ENCODE measurements at regions of chr15 and their contacts with region 1.

Region 1: DNA sequence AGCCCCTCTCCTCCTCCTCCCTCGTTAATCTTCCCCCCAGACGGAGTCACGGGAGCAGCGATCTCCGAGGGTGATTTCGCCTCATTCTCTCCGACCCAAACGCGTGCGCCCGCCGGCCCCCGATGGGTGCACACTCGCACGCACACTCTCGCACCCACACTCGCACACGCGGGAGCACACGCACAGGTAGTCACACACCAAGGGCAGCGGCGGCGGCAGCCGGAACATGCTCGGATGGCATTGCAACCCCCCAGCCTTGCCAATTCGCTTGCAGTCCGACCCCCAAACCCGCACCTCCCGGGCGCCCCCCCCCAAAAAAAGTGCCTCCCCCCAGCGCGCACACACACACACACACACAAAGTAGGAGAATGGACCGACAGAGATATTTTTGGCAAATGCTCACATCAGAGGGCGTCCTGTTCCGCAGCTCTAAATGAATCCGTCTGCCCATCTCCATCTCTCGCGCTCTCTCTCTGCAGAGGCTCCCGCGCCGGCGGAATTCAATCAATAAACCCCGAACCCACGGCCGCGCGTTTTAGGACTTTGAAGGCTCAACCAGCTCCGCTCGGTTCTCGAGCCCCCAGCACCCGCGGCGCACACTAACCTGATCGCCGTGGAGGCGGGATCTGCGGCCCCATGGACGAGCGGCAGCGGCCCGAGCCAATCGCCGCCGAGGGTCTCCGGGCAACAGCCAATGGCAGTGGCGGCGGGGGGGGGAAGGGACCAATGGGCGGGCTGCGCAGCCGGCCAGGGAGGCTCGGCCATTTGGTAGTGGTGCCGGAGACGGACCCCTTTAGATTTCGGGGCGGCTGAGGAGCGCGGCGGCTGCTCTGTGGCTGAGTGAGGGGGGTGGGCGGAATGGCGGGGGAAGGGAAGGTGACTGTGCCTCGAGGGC is at the start of gene ANP32A:
- DNase-seq: peak; percentile 96
- H3K4me3 ChIP-seq: peak within 1 kb of the TSS; percentile 92 to 97 (median 93)
- H3K27ac ChIP-seq: peak within 1 kb of the TSS; percentile 77
- H3K4me1 ChIP-seq: peaks cover 19% of the 10 kb centered on the region
- H3K27me3 ChIP-seq: peaks cover 0 to 3% of the 10 kb centered on the region in 2 experiments
- CTCF ChIP-seq: no peak
- POLR2A ChIP-seq: no peak
- total RNA-seq, gene ANP32A: 169 and 179 TPM in 2 replicates

Region 2: DNA sequence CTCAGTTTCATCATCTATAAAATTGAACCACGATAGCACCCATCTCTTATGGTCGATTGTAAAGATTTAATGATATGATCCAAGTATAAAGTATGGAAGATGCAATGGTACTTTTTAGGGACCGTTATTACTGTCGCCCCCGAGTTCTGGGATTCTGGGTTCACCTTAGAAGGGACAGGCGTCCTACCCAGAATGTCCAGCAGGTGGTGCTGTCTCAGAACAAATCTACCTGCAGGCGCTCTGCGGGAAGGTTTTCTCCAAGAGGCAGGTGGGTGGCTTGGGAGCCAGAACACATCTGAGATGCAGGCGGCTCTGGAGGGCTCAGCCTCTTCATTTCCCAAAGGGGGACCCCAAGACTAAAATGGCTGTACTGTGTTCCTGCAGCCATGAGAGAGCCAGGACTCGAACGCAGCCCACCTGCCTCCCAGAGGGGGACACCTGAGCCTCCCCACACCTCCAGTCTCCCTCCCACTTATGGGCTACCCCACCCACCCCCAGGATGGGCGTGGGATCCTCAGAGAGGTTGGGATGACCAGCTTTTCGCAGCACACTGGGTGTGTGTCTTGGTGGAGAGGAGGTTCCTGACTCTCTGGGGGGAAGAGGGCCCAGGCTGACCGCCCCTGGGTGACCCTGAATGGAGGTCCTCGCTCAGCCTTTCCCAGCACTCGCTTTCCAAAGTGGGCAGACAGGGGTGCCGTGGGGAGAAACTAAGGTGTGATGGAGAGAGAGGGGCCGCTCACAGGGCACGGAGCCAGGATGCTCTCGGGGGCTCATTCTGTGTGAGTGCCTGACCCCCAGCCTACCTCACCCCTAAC is 269.9 kb before region 1 on chr15:
- CTCF ChIA-PET with region 1: interaction called, 4 read pairs
- POLR2A ChIA-PET with region 1: no interaction called
- dilution Hi-C with region 1: no loop called
- intact Hi-C with region 1: loop called (anchors 5 kb)
- DNase-seq: peak; percentile 41
- H3K4me3 ChIP-seq: no peak overlapping the region
- H3K27ac ChIP-seq: no peak overlapping the region
- H3K4me1 ChIP-seq: peaks cover 8% of the 10 kb centered on the region
- H3K27me3 ChIP-seq: peaks cover 5% of the 10 kb centered on the region in 2 experiments
- CTCF ChIP-seq: peak; percentile 80 to 87
- POLR2A ChIP-seq: no peak

Region 3: GRCh38 chr15:68730471-68730919 is 90.0 kb before region 1 on chr15:
- CTCF ChIA-PET with region 1: interaction called, 3 read pairs
- POLR2A ChIA-PET with region 1: interaction called, 3 read pairs
- dilution Hi-C with region 1: no loop called
- intact Hi-C with region 1: loop called (anchors 1 kb)
- DNase-seq: peak; percentile 76
- H3K4me3 ChIP-seq: no peak overlapping the region
- H3K27ac ChIP-seq: no peak overlapping the region
- H3K4me1 ChIP-seq: peaks cover 2% of the 10 kb centered on the region
- H3K27me3 ChIP-seq: peaks cover 9 to 11% of the 10 kb centered on the region in 2 experiments
- CTCF ChIP-seq: peak; percentile 35 to 64
- POLR2A ChIP-seq: no peak

Region 4: GRCh38 chr15:68755731-68756130 is 64.8 kb before region 1 on chr15:
- CTCF ChIA-PET with region 1: no interaction called
- POLR2A ChIA-PET with region 1: interaction called, 4 read pairs
- dilution Hi-C with region 1: no loop called
- intact Hi-C with region 1: loop called (anchors 2 kb)
- DNase-seq: no peak
- H3K4me3 ChIP-seq: no peak overlapping the region
- H3K27ac ChIP-seq: no peak overlapping the region
- H3K4me1 ChIP-seq: peaks cover 19% of the 10 kb centered on the region
- H3K27me3 ChIP-seq: peaks cover 2 to 7% of the 10 kb centered on the region in 2 experiments
- CTCF ChIP-seq: no peak
- POLR2A ChIP-seq: no peak

Region 5: GRCh38 chr15:68765602-68766368 is 54.8 kb before region 1 on chr15:
- CTCF ChIA-PET with region 1: no interaction called
- POLR2A ChIA-PET with region 1: no interaction called
- dilution Hi-C with region 1: no loop called
- intact Hi-C with region 1: loop called (anchors 1 kb)
- DNase-seq: peak; percentile 80
- H3K4me3 ChIP-seq: no peak overlapping the region
- H3K27ac ChIP-seq: peak overlapping the region; percentile 35
- H3K4me1 ChIP-seq: peaks cover 52% of the 10 kb centered on the region
- H3K27me3 ChIP-seq: no peaks in the 10 kb centered on the region
- CTCF ChIP-seq: no peak
- POLR2A ChIP-seq: no peak

Region 6: GRCh38 chr15:68783226-68784058 is 37.1 kb before region 1 on chr15:
- CTCF ChIA-PET with region 1: interaction called, 7 read pairs
- POLR2A ChIA-PET with region 1: no interaction called
- dilution Hi-C with region 1: no loop called
- intact Hi-C with region 1: loop called (anchors 1 kb)
- DNase-seq: peak; percentile 32
- H3K4me3 ChIP-seq: no peak overlapping the region
- H3K27ac ChIP-seq: no peak overlapping the region
- H3K4me1 ChIP-seq: peaks cover 14% of the 10 kb centered on the region
- H3K27me3 ChIP-seq: no peaks in the 10 kb centered on the region
- CTCF ChIP-seq: peak; percentile 39 to 73
- POLR2A ChIP-seq: no peak

Region 7: DNA sequence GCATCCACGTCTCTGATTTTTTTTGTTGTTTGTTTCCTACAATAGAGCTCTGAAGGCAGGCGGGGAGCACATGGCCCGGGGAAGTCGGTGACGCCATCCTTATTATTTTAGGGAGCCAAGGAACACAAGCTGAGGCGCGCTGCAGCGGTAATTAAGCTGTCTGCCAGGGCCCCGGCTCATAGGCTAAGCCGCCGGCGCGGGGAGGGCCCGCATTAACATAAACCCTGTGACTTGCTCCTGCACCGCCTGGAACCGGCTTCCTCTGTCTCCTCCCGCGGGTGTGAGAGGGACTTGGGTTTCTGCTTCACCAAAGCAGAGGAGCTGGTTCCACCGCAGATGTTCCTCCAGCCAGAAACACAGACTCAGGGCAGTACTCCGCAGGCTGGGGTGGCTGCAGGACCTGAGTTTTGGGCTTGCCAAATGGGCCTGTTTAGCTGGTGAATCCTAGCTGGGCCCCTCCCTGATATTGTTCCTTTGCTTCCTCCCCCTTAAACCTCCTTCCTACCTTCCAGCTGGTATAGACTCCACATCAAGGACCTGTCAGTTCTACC is 25.2 kb before region 1 on chr15:
- CTCF ChIA-PET with region 1: interaction called, 12 read pairs
- POLR2A ChIA-PET with region 1: interaction called, 3 read pairs
- dilution Hi-C with region 1: no loop called
- intact Hi-C with region 1: loop called (anchors 1 kb)
- DNase-seq: peak; percentile 93
- H3K4me3 ChIP-seq: no peak overlapping the region
- H3K27ac ChIP-seq: peak overlapping the region; percentile 58
- H3K4me1 ChIP-seq: peaks cover 27% of the 10 kb centered on the region
- H3K27me3 ChIP-seq: no peaks in the 10 kb centered on the region
- CTCF ChIP-seq: no peak
- POLR2A ChIP-seq: no peak

Measured in endothelial cell of umbilical vein (primary cell).